ENCODE measurements at regions of chr19 and their contacts with region 1.

Region 1: DNA sequence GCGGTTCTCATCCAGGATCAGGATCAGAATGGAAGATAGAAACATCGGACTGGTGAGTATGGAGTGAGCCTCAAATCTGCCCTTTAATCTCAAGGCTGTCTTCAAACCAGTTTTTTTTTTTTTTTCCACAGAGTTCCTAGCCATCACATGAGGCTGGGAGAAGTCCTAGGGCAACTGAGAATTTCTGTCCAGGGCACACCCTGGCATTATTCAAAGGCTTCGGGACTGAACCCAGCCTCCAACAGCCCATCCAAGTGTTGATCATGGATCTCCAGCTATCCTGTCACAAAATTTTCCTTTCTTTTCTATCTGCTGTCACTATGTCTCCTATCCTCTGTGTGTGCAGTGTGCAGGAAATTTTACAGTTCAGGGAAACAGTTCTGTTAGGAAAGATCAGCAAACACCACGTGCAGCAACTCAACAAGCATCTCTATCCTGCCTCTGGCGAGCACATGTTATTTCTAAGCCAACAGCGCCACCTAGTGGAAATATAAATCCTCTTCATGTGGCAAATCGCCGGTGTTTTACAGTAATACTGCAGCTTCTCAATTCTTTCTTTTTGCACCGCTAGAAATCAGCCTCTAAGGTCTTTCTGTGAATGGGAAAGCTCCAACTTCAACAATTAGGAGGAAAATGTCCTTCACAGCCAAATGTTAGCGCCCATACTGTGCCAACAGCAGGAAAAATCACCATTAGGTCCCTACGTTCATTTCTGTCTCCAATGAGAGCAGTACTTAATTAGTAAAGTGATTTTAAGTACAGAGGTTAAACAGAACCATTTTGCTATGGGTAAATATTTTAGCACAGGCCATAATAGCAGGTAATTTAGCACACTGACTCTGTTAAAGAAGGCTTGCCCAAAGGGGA is 21.4 kb upstream of the ZNF181 start:
- DNase-seq: no peak
- ATAC-seq: peak; percentile 64 to 89 (median 74)
- H3K4me3 ChIP-seq: no peak overlapping the region
- H3K27ac ChIP-seq: no peak overlapping the region
- H3K4me1 ChIP-seq: no peaks in the 10 kb centered on the region
- H3K27me3 ChIP-seq: no peaks in the 10 kb centered on the region
- CTCF ChIP-seq: peak; percentile 84

Region 2: DNA sequence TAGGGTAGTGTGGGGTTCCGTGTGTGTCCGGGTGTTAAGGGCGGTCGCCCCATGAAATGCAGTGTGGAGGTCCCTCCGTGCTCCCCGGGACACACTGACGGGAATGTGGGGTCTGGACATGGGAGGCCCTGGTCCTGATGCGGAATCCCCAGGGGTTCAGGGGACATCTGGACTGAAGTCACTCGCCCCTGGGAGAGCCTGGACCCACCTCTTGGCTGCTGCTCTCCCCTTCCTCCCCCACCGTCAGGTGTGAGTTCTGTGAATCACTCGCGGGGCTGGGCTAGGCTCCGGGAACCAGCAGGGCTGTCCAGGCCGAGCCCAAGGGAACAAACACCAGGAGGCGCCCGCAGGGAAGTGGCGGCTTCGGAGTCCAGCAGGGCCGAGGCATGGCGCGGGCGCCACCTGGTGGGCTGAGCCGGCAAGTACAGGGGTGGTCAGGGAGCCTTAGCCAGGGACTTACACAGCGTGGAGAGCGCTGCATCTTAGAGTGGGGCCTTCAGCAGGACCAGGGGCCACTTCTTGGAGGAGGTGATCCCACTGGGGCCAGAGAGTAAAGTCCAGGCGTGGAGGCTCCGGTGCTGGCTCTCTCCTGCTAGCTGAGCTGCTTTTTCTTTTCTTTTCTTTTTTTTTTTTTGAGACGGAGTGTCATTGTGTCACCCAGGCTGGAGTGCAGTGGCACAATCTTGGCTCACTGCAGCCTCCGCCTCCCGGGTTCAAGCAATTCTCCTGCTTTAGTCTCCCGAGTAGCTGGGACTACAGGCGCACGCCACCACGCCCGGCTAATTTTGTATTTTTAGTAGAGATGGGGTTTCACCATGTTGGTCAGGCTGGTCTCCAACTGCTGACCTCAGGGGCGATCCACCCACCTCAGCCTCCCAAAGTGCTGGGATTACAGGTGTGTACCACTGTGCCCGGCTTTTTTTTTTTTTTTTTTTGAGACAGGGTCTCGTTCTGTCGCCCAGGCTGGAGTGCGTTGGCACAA is 211.0 kb before region 1 on chr19:
- intact Hi-C with region 1: loop called (anchors 2 kb)
- DNase-seq: peak; percentile 95 to 97
- ATAC-seq: peak; percentile 94 to 97 (median 96)
- H3K4me3 ChIP-seq: no peak overlapping the region
- H3K27ac ChIP-seq: peak overlapping the region; percentile 19
- H3K4me1 ChIP-seq: no peaks in the 10 kb centered on the region
- H3K27me3 ChIP-seq: no peaks in the 10 kb centered on the region
- CTCF ChIP-seq: peak; percentile 99

Region 3: GRCh38 chr19:34639491-34640085 is 73.0 kb before region 1 on chr19:
- intact Hi-C with region 1: loop called (anchors 1 to 2 kb)
- DNase-seq: no peak
- ATAC-seq: peak; percentile 48 to 83 (median 68)
- H3K4me3 ChIP-seq: no peak overlapping the region
- H3K27ac ChIP-seq: no peak overlapping the region
- H3K4me1 ChIP-seq: peaks cover 6% of the 10 kb centered on the region
- H3K27me3 ChIP-seq: no peaks in the 10 kb centered on the region
- CTCF ChIP-seq: peak; percentile 87

Region 4: DNA sequence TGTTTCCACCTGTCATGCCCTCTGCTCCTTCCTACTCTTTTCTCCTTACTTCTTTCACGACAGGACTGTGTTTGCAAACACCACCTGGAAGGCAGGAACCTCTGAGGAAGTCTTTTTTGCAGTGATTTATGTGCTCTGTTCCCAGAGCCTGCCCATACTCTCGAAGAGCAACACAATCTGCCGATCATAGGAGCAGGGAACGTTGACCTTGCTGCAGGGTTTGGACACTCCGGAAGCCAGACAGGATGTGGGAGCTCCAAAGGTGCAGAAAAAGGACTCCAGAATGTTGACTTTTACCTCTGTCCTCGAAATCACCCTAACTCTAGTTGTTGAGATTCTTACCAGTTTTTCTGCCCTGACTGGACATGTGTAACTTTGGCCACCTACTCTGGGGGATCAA is 12.8 kb after region 1 on chr19:
- intact Hi-C with region 1: no loop called
- DNase-seq: no peak
- ATAC-seq: no peak
- H3K4me3 ChIP-seq: no peak overlapping the region
- H3K27ac ChIP-seq: no peak overlapping the region
- H3K4me1 ChIP-seq: no peaks in the 10 kb centered on the region
- H3K27me3 ChIP-seq: peaks cover 2 to 4% (median 4%) of the 10 kb centered on the region in 3 donors
- CTCF ChIP-seq: no peak